Heart right ventricle (tissue), 16 donors: ENCODE measurements at regions of chr10 and their contacts with region 1.

Region 1: GRCh38 chr10:114397651-114398145 is 6.6 kb downstream of the AFAP1L2 start:
- DNase-seq: no peak
- ATAC-seq: peak in 6 of 8 donors; percentile 40 to 56 (median 46)
- H3K4me3 ChIP-seq: peak overlapping the region in 5 of 10 donors; percentile 0 to 16 (median 9)
- H3K27ac ChIP-seq: peak overlapping the region in 8 of 10 donors; percentile 1 to 59 (median 32)
- H3K4me1 ChIP-seq: peaks cover 3 to 82% (median 50%) of the 10 kb centered on the region in 9 donors
- H3K27me3 ChIP-seq: peaks cover 0 to 37% (median 6%) of the 10 kb centered on the region in 7 donors
- CTCF ChIP-seq: no peak

Region 2: GRCh38 chr10:114346271-114347031 is 51.2 kb before region 1 on chr10:
- intact Hi-C with region 1: loop called in 1 of 10 experiments (anchors 10 kb)
- DNase-seq: no peak
- ATAC-seq: peak in 2 of 8 donors; percentile 17 to 35
- H3K4me3 ChIP-seq: no peak overlapping the region
- H3K27ac ChIP-seq: peak overlapping the region in 3 of 10 donors; percentile 10 to 48 (median 33)
- H3K4me1 ChIP-seq: peaks cover 0 to 43% (median 12%) of the 10 kb centered on the region in 9 donors
- H3K27me3 ChIP-seq: no peaks in the 10 kb centered on the region
- CTCF ChIP-seq: no peak